ENCODE measurements at regions of chr1 and their contacts with region 1.

Region 1: DNA sequence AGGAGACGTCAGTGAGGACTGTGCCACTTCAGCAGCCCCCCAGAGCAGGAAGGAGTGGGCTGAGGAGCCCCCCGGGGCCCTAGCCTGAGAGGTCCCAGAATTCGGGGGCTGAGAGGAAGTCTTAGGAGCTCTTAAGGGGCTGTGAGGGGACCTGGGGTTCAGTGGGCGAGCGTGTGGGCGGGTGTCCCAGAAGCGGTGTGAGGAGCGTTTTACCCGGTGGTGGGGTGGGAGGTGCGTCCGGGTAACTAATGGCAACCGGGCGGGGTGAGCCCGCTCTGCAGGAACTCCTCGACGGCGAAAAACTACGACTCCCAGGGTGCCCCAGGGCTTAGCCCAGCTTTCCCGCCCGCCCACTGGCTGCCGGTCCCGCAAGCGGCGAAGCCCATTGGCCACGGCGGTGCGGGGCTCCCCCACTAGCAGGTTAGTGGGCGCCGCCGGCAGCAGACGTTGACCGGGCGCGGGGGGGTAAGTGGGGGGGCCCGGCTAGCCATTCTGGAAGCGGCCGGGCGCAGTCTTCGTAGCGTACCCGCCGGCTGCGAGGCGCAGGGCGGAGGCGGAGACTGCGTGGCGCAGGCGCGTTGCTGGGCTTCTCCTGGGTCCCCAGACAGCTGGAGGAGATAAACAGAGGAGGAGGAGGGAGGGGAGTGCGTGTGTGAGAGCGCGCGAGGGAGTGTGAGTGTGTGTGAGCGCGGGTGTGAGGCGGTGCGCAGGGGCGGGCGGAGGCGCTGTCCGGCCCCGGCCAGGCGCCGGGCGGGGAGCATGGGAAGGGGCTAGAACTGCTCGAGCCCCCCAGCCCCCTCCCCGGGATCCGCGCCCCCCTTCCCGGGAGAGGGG is at the start of gene WDTC1:
- DNase-seq: peak; percentile 99
- H3K4me3 Mint-ChIP-seq: peak within 1 kb of the TSS; percentile 98
- H3K27ac Mint-ChIP-seq: peak within 1 kb of the TSS; percentile 95
- H3K4me1 Mint-ChIP-seq: peaks cover 23% of the 10 kb centered on the region
- H3K27me3 Mint-ChIP-seq: no peaks in the 10 kb centered on the region
- total RNA-seq, gene WDTC1: 17.4 and 18.2 TPM in 2 replicates

Region 2: GRCh38 chr1:27257155-27257554 is 22.9 kb after region 1 on chr1:
- intact Hi-C with region 1: loop called (anchors 1 kb)
- DNase-seq: no peak
- H3K4me3 Mint-ChIP-seq: no peak overlapping the region
- H3K27ac Mint-ChIP-seq: no peak overlapping the region
- H3K4me1 Mint-ChIP-seq: peaks cover 18% of the 10 kb centered on the region
- H3K27me3 Mint-ChIP-seq: no peaks in the 10 kb centered on the region

Region 3: GRCh38 chr1:27489910-27490741 is 255.9 kb after region 1 on chr1 and contains the start of gene WASF2:
- intact Hi-C with region 1: no loop called
- DNase-seq: peak; percentile 99
- H3K4me3 Mint-ChIP-seq: peak within 1 kb of the TSS; percentile 89
- H3K27ac Mint-ChIP-seq: peak within 1 kb of the TSS; percentile 99
- H3K4me1 Mint-ChIP-seq: peaks cover 25% of the 10 kb centered on the region
- H3K27me3 Mint-ChIP-seq: no peaks in the 10 kb centered on the region
- total RNA-seq, gene WASF2: 109 TPM in 2 replicates

Measured in activated CD4-positive, alpha-beta T cell treated with anti-CD3 and anti-CD28 coated beads, Interleukin-2, amount 10 ng/mL, durations not matched to agents 24 days and 14 days (primary cell).